Heart right ventricle (tissue), 16 donors: ENCODE measurements at regions of chr3 and their contacts with region 1.

Region 1: DNA sequence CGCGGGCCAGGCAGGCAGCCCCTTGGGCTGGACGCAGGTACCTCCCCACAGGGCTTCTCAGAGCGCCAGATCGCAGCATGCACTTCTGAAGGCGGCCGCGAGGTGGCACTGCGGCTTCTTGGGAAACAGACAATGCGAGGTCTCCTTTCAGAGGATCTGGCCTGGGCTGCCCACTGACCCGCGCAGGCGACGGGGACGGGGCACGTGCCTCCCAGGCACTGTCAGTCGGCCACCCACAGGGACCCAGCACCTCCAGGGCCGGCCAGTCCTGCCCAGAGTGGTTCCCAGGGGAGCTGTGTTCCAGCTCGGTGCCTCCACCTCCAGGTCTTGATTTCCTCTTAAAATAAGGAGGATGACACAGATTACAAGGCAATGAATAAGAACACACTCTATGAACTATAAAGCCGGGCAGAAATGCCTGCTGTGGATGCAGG is 24.4 kb upstream of the TXNRD3 start:
- DNase-seq: peak; percentile 74 to 84
- ATAC-seq: peak; percentile 77 to 95 (median 90)
- H3K4me3 ChIP-seq: no peak overlapping the region
- H3K27ac ChIP-seq: no peak overlapping the region
- H3K4me1 ChIP-seq: peaks cover 0 to 11% (median 7%) of the 10 kb centered on the region in 9 donors
- H3K27me3 ChIP-seq: peaks cover 0 to 33% (median 13%) of the 10 kb centered on the region in 7 donors
- CTCF ChIP-seq: peak; percentile 87 to 99 (median 97)

Region 2: GRCh38 chr3:126064627-126065258 is 614.6 kb before region 1 on chr3:
- intact Hi-C with region 1: no loop called
- DNase-seq: no peak
- ATAC-seq: no peak
- H3K4me3 ChIP-seq: no peak overlapping the region
- H3K27ac ChIP-seq: no peak overlapping the region
- H3K4me1 ChIP-seq: peaks cover 0 to 10% (median 5%) of the 10 kb centered on the region in 9 donors
- H3K27me3 ChIP-seq: no peaks in the 10 kb centered on the region
- CTCF ChIP-seq: no peak

Region 3: GRCh38 chr3:126746395-126747177 is 67.3 kb after region 1 on chr3:
- intact Hi-C with region 1: loop called in 2 of 10 experiments (anchors 2 to 5 kb)
- DNase-seq: peak; percentile 58 to 75
- ATAC-seq: peak; percentile 86 to 93 (median 91)
- H3K4me3 ChIP-seq: peak overlapping the region in 4 of 10 donors; percentile 2 to 20 (median 8)
- H3K27ac ChIP-seq: peak overlapping the region; percentile 67 to 91 (median 88)
- H3K4me1 ChIP-seq: peaks cover 0 to 49% (median 17%) of the 10 kb centered on the region in 9 donors
- H3K27me3 ChIP-seq: no peaks in the 10 kb centered on the region
- CTCF ChIP-seq: peak in 2 of 9 donors; percentile 11 to 21

Region 4: DNA sequence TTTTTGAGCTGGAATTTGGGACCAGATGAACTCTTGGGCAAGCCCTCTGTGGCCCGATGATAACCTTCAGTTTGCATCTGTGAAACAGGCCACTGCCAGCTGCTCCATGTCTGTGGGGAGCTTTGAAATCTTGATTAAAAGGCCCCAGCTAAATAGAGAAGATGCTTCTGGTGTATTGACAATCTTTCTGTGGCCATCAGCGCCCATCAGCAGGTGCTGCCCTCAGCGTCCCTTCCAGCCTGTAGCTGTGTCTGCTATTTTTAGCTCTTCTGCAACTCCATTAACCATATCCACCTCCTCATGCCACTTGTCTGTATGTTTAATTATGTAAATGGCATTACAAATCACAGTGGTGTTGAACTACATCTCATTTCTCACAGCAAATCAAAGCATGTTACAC is 78.7 kb after region 1 on chr3:
- intact Hi-C with region 1: no loop called
- DNase-seq: no peak
- ATAC-seq: peak in 3 of 8 donors; percentile 51 to 72 (median 51)
- H3K4me3 ChIP-seq: no peak overlapping the region
- H3K27ac ChIP-seq: no peak overlapping the region
- H3K4me1 ChIP-seq: peaks cover 0 to 19% (median 2%) of the 10 kb centered on the region in 9 donors
- H3K27me3 ChIP-seq: no peaks in the 10 kb centered on the region
- CTCF ChIP-seq: no peak

Region 5: GRCh38 chr3:126982471-126983175 is 303.3 kb after region 1 on chr3 and contains the start of gene PLXNA1:
- intact Hi-C with region 1: loop called in 5 of 10 experiments (anchors 5 to 10 kb)
- DNase-seq: peak; percentile 71 to 83
- ATAC-seq: peak; percentile 76 to 89 (median 81)
- H3K4me3 ChIP-seq: peak within 1 kb of the TSS; percentile 70 to 87 (median 76)
- H3K27ac ChIP-seq: peak within 1 kb of the TSS in 9 of 10 donors; percentile 59 to 93 (median 73)
- H3K4me1 ChIP-seq: peaks cover 18 to 50% (median 41%) of the 10 kb centered on the region in 9 donors
- H3K27me3 ChIP-seq: peaks cover 0 to 39% (median 0%) of the 10 kb centered on the region in 7 donors
- CTCF ChIP-seq: peak; percentile 81 to 94 (median 89)
- total RNA-seq, gene PLXNA1: 19.0 to 29.7 (median 25.1) TPM

Region 6: GRCh38 chr3:127002195-127003174 is 323.1 kb after region 1 on chr3:
- intact Hi-C with region 1: loop called in 2 of 10 experiments (anchors 5 kb)
- DNase-seq: peak; percentile 88 to 91
- ATAC-seq: peak; percentile 82 to 96 (median 91)
- H3K4me3 ChIP-seq: peak overlapping the region in 5 of 10 donors; percentile 10 to 34 (median 22)
- H3K27ac ChIP-seq: peak overlapping the region in 9 of 10 donors; percentile 56 to 86 (median 69)
- H3K4me1 ChIP-seq: peaks cover 8 to 60% (median 33%) of the 10 kb centered on the region in 9 donors
- H3K27me3 ChIP-seq: no peaks in the 10 kb centered on the region
- CTCF ChIP-seq: peak; percentile 21 to 79 (median 53)

Region 7: GRCh38 chr3:127182471-127183367 is 503.4 kb after region 1 on chr3:
- intact Hi-C with region 1: loop called in 6 of 10 experiments (anchors 2 to 10 kb)
- DNase-seq: no peak
- ATAC-seq: peak in 2 of 8 donors; percentile 18 to 26
- H3K4me3 ChIP-seq: no peak overlapping the region
- H3K27ac ChIP-seq: no peak overlapping the region
- H3K4me1 ChIP-seq: no peaks in the 10 kb centered on the region
- H3K27me3 ChIP-seq: peaks cover 0 to 4% (median 0%) of the 10 kb centered on the region in 7 donors
- CTCF ChIP-seq: no peak

Region 8: GRCh38 chr3:127544192-127544802 is 865.0 kb after region 1 on chr3:
- intact Hi-C with region 1: loop called (anchors 2 to 10 kb)
- DNase-seq: peak; percentile 68 to 71
- ATAC-seq: peak in 7 of 8 donors; percentile 3 to 51 (median 45)
- H3K4me3 ChIP-seq: no peak overlapping the region
- H3K27ac ChIP-seq: no peak overlapping the region
- H3K4me1 ChIP-seq: peaks cover 0 to 21% (median 13%) of the 10 kb centered on the region in 9 donors
- H3K27me3 ChIP-seq: no peaks in the 10 kb centered on the region
- CTCF ChIP-seq: peak; percentile 63 to 85 (median 78)

Region 9: DNA sequence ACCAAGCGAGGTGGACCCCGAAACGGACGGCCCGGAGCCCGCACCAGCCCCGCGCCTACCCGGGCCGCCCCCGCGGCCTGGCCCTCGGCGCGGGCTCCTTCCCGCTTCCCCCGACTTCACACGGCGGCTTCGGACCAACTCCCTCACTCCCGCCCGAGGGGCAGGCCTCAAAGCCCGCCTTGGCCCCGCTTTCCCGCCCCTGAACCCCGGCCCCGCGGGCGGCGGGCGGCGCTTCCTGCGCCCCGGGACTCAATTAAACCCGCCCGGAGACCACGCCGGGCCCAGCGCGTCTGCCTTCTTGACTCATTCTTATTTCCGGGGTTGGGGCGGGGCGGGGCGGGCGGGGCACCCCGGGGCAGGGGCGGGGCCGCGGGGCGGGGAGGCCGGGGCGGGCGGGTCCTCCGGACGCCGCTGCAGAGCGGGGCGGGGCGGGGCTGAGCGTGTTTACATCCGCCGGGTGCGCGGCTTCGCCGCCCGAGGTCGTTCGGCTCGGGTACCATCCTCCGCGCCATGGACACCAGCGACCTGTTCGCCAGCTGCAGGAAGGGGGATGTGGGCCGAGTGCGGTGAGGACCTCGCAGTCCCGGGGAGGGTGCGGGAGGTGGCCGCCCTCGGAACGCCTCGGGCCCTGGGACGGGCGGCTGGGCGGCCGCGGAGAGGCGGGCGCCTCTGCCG is 993.3 kb after region 1 on chr3 and contains the start of gene ABTB1:
- intact Hi-C with region 1: no loop called
- DNase-seq: peak; percentile 82 to 89
- ATAC-seq: peak; percentile 82 to 95 (median 86)
- H3K4me3 ChIP-seq: peak within 1 kb of the TSS; percentile 63 to 99 (median 85)
- H3K27ac ChIP-seq: peak within 1 kb of the TSS; percentile 86 to 99 (median 93)
- H3K4me1 ChIP-seq: peaks cover 7 to 40% (median 29%) of the 10 kb centered on the region in 9 donors
- H3K27me3 ChIP-seq: no peaks in the 10 kb centered on the region
- CTCF ChIP-seq: no peak
- total RNA-seq, gene ABTB1: 19.6 to 47.9 (median 23.9) TPM